ENCODE measurements at regions of chr12 and their contacts with region 1.

Region 1: GRCh38 chr12:115752913-115753726 is 524.4 kb downstream of the MED13L start:
- DNase-seq: peak; percentile 20 to 50 (median 22)
- H3K4me3 ChIP-seq: no peak overlapping the region
- H3K27ac ChIP-seq: no peak overlapping the region
- H3K4me1 ChIP-seq: no peaks in the 10 kb centered on the region
- H3K27me3 ChIP-seq: no peaks in the 10 kb centered on the region
- CTCF ChIP-seq: peak; percentile 26 to 64 (median 57)
- EP300 ChIP-seq: no peak
- POLR2A ChIP-seq: no peak

Region 2: DNA sequence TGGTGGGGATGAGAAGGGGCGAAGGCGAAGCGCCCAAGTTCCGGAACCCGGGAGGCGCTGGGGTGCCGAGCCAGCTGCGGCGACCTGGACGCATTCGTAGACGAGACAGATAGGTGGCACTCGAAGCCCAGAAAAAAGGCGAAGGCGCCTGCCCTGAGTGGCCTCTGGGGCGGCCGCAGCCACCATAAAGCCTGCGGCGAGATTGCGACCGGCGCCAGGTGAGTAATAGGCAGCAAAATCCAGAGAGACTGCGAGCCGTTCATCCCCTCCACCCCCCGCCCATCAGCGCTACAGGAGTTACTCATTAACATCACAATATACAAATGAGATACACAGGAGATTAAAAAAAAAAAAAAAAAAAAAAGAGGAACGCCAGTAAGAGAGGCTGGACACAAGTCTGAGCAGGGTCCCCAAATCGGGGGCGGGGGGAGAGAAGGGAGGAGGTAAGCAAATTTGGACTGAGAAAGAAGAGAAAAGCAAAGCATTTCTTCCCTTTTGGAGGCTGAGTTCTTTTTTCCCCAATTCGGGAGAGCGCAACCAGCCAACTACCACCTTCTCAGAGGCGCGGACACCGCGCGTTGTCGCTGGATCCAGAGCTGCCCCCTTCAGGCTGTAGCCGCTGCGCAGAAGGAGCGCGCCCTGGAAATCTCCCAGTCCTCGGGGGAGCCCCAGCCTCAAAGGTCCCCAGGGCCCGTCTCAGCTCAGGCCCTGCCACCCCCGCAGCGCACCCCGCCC is 1084.8 kb before region 1 on chr12:
- intact Hi-C with region 1: loop called (anchors 2 to 5 kb)
- DNase-seq: peak; percentile 82 to 87 (median 83)
- H3K4me3 ChIP-seq: peak overlapping the region; percentile 45
- H3K27ac ChIP-seq: peak overlapping the region; percentile 43 to 80
- H3K4me1 ChIP-seq: peaks cover 8% of the 10 kb centered on the region
- H3K27me3 ChIP-seq: no peaks in the 10 kb centered on the region
- CTCF ChIP-seq: peak; percentile 43 to 74 (median 49)
- EP300 ChIP-seq: no peak
- POLR2A ChIP-seq: peak; percentile 30

Region 3: DNA sequence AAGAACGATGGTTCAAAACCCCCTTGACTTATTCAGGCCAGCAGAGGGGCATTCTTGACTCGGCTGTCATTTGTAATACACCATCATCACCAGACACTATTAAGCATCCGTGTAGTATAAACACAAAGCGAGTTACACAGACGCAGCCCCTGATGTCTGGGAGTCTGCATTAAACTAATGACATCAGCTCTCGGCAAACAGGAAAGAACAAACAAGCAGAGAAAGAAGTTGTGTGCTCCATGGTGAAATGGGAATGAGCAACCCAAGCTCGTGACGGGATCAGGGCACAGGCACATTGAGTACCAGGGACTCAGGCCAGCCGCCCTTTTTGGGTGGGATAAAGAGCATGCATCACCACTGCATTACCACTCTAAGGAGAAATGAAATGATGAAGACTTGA is 64.3 kb after region 1 on chr12:
- intact Hi-C with region 1: no loop called
- DNase-seq: no peak
- H3K4me3 ChIP-seq: no peak overlapping the region
- H3K27ac ChIP-seq: no peak overlapping the region
- H3K4me1 ChIP-seq: no peaks in the 10 kb centered on the region
- H3K27me3 ChIP-seq: no peaks in the 10 kb centered on the region
- CTCF ChIP-seq: no peak
- EP300 ChIP-seq: no peak
- POLR2A ChIP-seq: no peak

Region 4: GRCh38 chr12:115857160-115857922 is 104.2 kb after region 1 on chr12:
- intact Hi-C with region 1: no loop called
- DNase-seq: no peak
- H3K4me3 ChIP-seq: no peak overlapping the region
- H3K27ac ChIP-seq: no peak overlapping the region
- H3K4me1 ChIP-seq: no peaks in the 10 kb centered on the region
- H3K27me3 ChIP-seq: no peaks in the 10 kb centered on the region
- CTCF ChIP-seq: no peak
- EP300 ChIP-seq: no peak
- POLR2A ChIP-seq: no peak

Region 5: GRCh38 chr12:115983226-115983798 is 230.2 kb after region 1 on chr12:
- intact Hi-C with region 1: no loop called
- DNase-seq: no peak
- H3K4me3 ChIP-seq: no peak overlapping the region
- H3K27ac ChIP-seq: no peak overlapping the region
- H3K4me1 ChIP-seq: peaks cover 2% of the 10 kb centered on the region
- H3K27me3 ChIP-seq: no peaks in the 10 kb centered on the region
- CTCF ChIP-seq: no peak
- EP300 ChIP-seq: no peak
- POLR2A ChIP-seq: no peak